Common myeloid progenitor, CD34-positive (primary cell): ENCODE measurements at regions of chr1 and their contacts with region 1.

Region 1: GRCh38 chr1:184075055-184076029 is 23.8 kb downstream of the TSEN15 start:
- DNase-seq: peak; percentile 59 to 82 (median 78)
- H3K4me3 ChIP-seq: no peak overlapping the region
- H3K27ac ChIP-seq: no peak overlapping the region
- H3K4me1 ChIP-seq: no peaks in the 10 kb centered on the region
- H3K27me3 ChIP-seq: no peaks in the 10 kb centered on the region

Region 2: GRCh38 chr1:184222652-184223052 is 147.3 kb after region 1 on chr1:
- CTCF ChIA-PET with region 1: interaction called, 21 read pairs
- POLR2A ChIA-PET with region 1: no interaction called
- DNase-seq: peak; percentile 33 to 52 (median 36)
- H3K4me3 ChIP-seq: peak overlapping the region in 2 of 7 experiments; percentile 13 to 65
- H3K27ac ChIP-seq: no peak overlapping the region
- H3K4me1 ChIP-seq: no peaks in the 10 kb centered on the region
- H3K27me3 ChIP-seq: no peaks in the 10 kb centered on the region

Region 3: DNA sequence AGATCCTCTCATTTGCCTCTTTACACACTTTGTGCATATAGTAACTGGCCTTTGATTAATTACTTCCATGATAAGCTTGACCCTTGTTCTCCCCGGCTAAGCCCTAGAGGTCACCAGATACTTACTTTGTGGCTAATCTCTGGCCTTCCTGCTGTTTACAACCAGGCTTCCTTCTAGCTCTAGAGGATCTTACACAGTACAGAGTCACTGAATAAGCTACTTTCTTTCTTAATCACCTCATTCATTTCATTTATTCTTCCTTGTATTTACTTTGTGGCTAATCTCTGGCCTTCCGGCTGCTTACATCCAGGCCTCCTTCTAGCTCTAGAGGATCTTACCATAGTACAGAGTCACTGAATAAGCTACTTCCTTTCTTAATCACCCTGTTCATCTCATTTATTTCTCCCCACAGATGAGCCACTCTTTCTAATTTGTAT is 167.2 kb after region 1 on chr1:
- CTCF ChIA-PET with region 1: no interaction called
- POLR2A ChIA-PET with region 1: no interaction called
- DNase-seq: peak; percentile 22 to 35 (median 25)
- H3K4me3 ChIP-seq: no peak overlapping the region
- H3K27ac ChIP-seq: no peak overlapping the region
- H3K4me1 ChIP-seq: peaks cover 0 to 8% (median 0%) of the 10 kb centered on the region in 4 experiments
- H3K27me3 ChIP-seq: no peaks in the 10 kb centered on the region

Region 4: GRCh38 chr1:184664042-184664655 is 588.8 kb after region 1 on chr1:
- CTCF ChIA-PET with region 1: interaction called, 15 read pairs
- POLR2A ChIA-PET with region 1: no interaction called
- DNase-seq: peak; percentile 61 to 76 (median 74)
- H3K4me3 ChIP-seq: peak overlapping the region; percentile 5 to 73 (median 46)
- H3K27ac ChIP-seq: no peak overlapping the region
- H3K4me1 ChIP-seq: peaks cover 0 to 10% (median 9%) of the 10 kb centered on the region in 4 experiments
- H3K27me3 ChIP-seq: peaks cover 0 to 4% (median 2%) of the 10 kb centered on the region in 5 experiments

Region 5: GRCh38 chr1:184691719-184692324 is 616.5 kb after region 1 on chr1:
- CTCF ChIA-PET with region 1: interaction called, 16 read pairs
- POLR2A ChIA-PET with region 1: no interaction called
- DNase-seq: peak; percentile 36 to 63 (median 56)
- H3K4me3 ChIP-seq: no peak overlapping the region
- H3K27ac ChIP-seq: no peak overlapping the region
- H3K4me1 ChIP-seq: no peaks in the 10 kb centered on the region
- H3K27me3 ChIP-seq: no peaks in the 10 kb centered on the region